ENCODE measurements at regions of chr16 and their contacts with region 1.

Region 1: GRCh38 chr16:19113453-19114351 is at the start of gene ITPRIPL2:
- DNase-seq: peak; percentile 85
- ATAC-seq: peak; percentile 88
- H3K4me3 ChIP-seq: peak within 1 kb of the TSS; percentile 69
- H3K27ac ChIP-seq: peak within 1 kb of the TSS; percentile 95
- H3K4me1 ChIP-seq: peaks cover 26% of the 10 kb centered on the region
- H3K27me3 ChIP-seq: no peaks in the 10 kb centered on the region
- CTCF ChIP-seq: no peak
- POLR2A ChIP-seq: peak; percentile 77
- RAD21 ChIP-seq: no peak
- total RNA-seq, gene ITPRIPL2: 11.1 and 15.0 TPM in 2 replicates

Region 2: GRCh38 chr16:19295393-19295792 is 181.7 kb after region 1 on chr16:
- CTCF ChIA-PET with region 1: no interaction called
- POLR2A ChIA-PET with region 1: no interaction called
- dilution Hi-C with region 1: no loop called
- in situ Hi-C with region 1: no loop called
- intact Hi-C with region 1: no loop called
- DNase-seq: no peak
- ATAC-seq: no peak
- H3K4me3 ChIP-seq: no peak overlapping the region
- H3K27ac ChIP-seq: no peak overlapping the region
- H3K4me1 ChIP-seq: no peaks in the 10 kb centered on the region
- H3K27me3 ChIP-seq: no peaks in the 10 kb centered on the region
- CTCF ChIP-seq: no peak
- POLR2A ChIP-seq: no peak
- RAD21 ChIP-seq: no peak

Region 3: GRCh38 chr16:19389246-19389645 is 275.5 kb after region 1 on chr16:
- CTCF ChIA-PET with region 1: no interaction called
- POLR2A ChIA-PET with region 1: no interaction called
- dilution Hi-C with region 1: no loop called
- in situ Hi-C with region 1: no loop called
- intact Hi-C with region 1: no loop called
- DNase-seq: no peak
- ATAC-seq: peak; percentile 46; the same call in 1 of the 2 replicates
- H3K4me3 ChIP-seq: no peak overlapping the region
- H3K27ac ChIP-seq: no peak overlapping the region
- H3K4me1 ChIP-seq: no peaks in the 10 kb centered on the region
- H3K27me3 ChIP-seq: no peaks in the 10 kb centered on the region
- CTCF ChIP-seq: 0 out of 2 replicates have a peak, but pooled peaks have one; percentile 25
- POLR2A ChIP-seq: no peak
- RAD21 ChIP-seq: 0 out of 2 replicates have a peak, but pooled peaks have one; percentile 26

Region 4: DNA sequence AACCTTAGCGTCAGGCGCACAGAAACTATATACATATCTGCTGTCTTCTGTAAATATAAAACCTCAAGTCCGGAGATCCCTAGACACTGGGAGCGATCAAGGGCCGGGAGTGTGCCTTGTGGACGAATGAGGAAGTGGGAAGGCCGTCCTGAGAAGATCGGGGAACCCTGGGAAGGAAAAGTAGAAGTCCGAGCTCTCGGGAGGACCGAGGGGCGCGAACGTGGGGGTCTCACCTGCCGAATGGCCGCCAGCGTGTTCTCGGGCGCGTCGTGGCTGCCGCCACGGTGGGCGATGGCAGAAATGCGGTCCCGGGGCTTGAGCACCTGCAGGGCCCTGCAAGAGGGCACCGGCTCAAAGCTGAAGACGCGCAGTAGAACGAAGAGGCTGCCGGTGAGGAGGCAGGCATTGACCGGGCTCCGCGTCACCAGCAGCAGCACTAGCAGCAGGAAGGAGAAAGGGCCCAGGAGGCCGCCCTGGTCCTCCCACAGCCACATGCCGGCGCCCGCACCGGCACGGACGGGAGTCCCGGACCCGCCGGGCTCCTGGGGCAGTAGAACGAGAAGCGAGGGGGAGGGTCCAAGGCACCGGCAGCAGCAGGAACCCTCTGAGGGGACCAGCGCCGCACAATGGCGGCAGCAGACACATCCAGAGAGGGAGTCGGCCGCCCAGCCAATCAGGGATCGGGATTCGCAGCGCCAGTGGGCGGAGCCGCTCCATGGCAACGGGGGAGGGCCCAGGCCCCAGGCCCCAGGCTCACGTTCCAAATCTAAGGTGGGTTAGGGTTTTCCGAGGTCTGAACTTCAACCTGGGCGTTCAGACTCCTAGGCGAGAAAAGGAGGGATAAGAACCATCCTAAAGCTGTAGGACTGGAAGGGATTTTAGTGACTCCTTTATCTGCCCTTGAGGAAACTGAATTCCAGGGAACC is 408.0 kb after region 1 on chr16 and contains the start of gene GDE1:
- CTCF ChIA-PET with region 1: no interaction called
- POLR2A ChIA-PET with region 1: no interaction called
- dilution Hi-C with region 1: no loop called
- in situ Hi-C with region 1: no loop called
- intact Hi-C with region 1: loop called (anchors 5 kb)
- DNase-seq: peak; percentile 86
- ATAC-seq: peak; percentile 88
- H3K4me3 ChIP-seq: peak within 1 kb of the TSS; percentile 81
- H3K27ac ChIP-seq: peak within 1 kb of the TSS; percentile 72
- H3K4me1 ChIP-seq: peaks cover 3% of the 10 kb centered on the region; the same call in 1 of the 2 replicates
- H3K27me3 ChIP-seq: no peaks in the 10 kb centered on the region
- CTCF ChIP-seq: peak; percentile 42
- POLR2A ChIP-seq: peak; percentile 76
- RAD21 ChIP-seq: no peak; the same call in 1 of the 2 replicates
- total RNA-seq, gene GDE1: 62.4 and 64.2 TPM in 2 replicates

Region 5: GRCh38 chr16:19717771-19718602 is 604.3 kb after region 1 on chr16 and contains the starts of genes IQCK and KNOP1:
- CTCF ChIA-PET with region 1: no interaction called
- POLR2A ChIA-PET with region 1: no interaction called
- dilution Hi-C with region 1: no loop called
- in situ Hi-C with region 1: loop called (anchors 25 kb)
- intact Hi-C with region 1: no loop called
- DNase-seq: peak; percentile 87
- ATAC-seq: peak; percentile 92
- H3K4me3 ChIP-seq: peak within 1 kb of the TSS; percentile 97
- H3K27ac ChIP-seq: peak within 1 kb of the TSS; percentile 86
- H3K4me1 ChIP-seq: peaks cover 6% of the 10 kb centered on the region; the same call in 1 of the 2 replicates
- H3K27me3 ChIP-seq: no peaks in the 10 kb centered on the region
- CTCF ChIP-seq: 0 out of 2 replicates have a peak, but pooled peaks have one; percentile 16
- POLR2A ChIP-seq: no peak; the same call in 1 of the 2 replicates
- RAD21 ChIP-seq: 0 out of 2 replicates have a peak, but pooled peaks have one; percentile 7
- total RNA-seq, gene IQCK: 4.2 and 5.4 TPM in 2 replicates
- total RNA-seq, gene KNOP1: 8.4 and 10.6 TPM in 2 replicates